Calu3 (cell line): ENCODE measurements at regions of chr10 and their contacts with region 1.

Region 1: GRCh38 chr10:71742301-71743088 is 22.9 kb upstream of the C10orf105 start:
- DNase-seq: no peak
- H3K4me3 Mint-ChIP-seq: no peak overlapping the region
- H3K27ac Mint-ChIP-seq: no peak overlapping the region
- H3K4me1 Mint-ChIP-seq: peaks cover 43% of the 10 kb centered on the region
- H3K27me3 Mint-ChIP-seq: no peaks in the 10 kb centered on the region
- CTCF ChIP-seq: no peak

Region 2: DNA sequence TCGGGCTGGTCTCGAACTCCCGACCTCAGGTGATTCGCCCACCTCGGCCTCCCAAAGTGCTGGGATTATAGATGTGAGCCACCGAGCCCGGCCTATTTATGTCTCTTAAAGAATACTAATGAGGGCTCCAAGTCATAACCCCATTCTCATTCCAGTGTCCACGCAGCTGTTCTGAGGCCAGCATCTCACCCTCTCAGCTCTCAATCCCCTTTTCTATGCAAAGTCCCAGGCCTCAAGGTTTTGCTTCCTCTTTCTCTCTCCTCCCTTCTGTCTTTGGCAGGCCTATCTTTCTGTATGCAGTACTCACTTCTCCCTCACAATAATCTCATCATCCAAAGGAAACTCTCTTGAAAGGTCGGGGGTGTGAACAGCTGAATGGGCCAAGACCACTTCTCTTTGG is 58.9 kb after region 1 on chr10:
- CTCF ChIA-PET with region 1: interaction called, 10 read pairs
- intact Hi-C with region 1: no loop called
- DNase-seq: no peak
- H3K4me3 Mint-ChIP-seq: no peak overlapping the region
- H3K27ac Mint-ChIP-seq: no peak overlapping the region
- H3K4me1 Mint-ChIP-seq: peaks cover 6% of the 10 kb centered on the region
- H3K27me3 Mint-ChIP-seq: peaks cover 30% of the 10 kb centered on the region
- CTCF ChIP-seq: no peak